Ovary (tissue), 10 donors: ENCODE measurements at regions of chr6 and their contacts with region 1.

Region 1: GRCh38 chr6:159789377-159790148 is at the start of gene TCP1:
- DNase-seq: peak; percentile 98 to 100 (median 99)
- H3K4me3 ChIP-seq: peak within 1 kb of the TSS; percentile 62
- H3K27ac ChIP-seq: peak within 1 kb of the TSS; percentile 95 to 97
- H3K4me1 ChIP-seq: peaks cover 11% of the 10 kb centered on the region
- H3K27me3 ChIP-seq: no peaks in the 10 kb centered on the region
- CTCF ChIP-seq: peak in 1 of 3 donors; percentile 11
- EP300 ChIP-seq: peak; percentile 21
- POLR2A ChIP-seq: peak; percentile 93
- total RNA-seq, gene TCP1: 83.5 to 189 (median 162) TPM

Region 2: GRCh38 chr6:159761873-159762680 is 27.5 kb before region 1 on chr6 and contains the start of gene ACAT2:
- intact Hi-C with region 1: loop called in 1 of 4 experiments (anchors 2 kb)
- DNase-seq: peak; percentile 95 to 97 (median 96)
- H3K4me3 ChIP-seq: peak within 1 kb of the TSS; percentile 86
- H3K27ac ChIP-seq: peak within 1 kb of the TSS; percentile 98 to 100
- H3K4me1 ChIP-seq: peaks cover 12% of the 10 kb centered on the region
- H3K27me3 ChIP-seq: no peaks in the 10 kb centered on the region
- CTCF ChIP-seq: peak in 1 of 3 donors; percentile 33
- EP300 ChIP-seq: peak; percentile 36
- POLR2A ChIP-seq: peak; percentile 69
- total RNA-seq, gene ACAT2: 7.2 to 113 (median 20.3) TPM

Region 3: GRCh38 chr6:159833556-159833955 is 44.0 kb after region 1 on chr6:
- intact Hi-C with region 1: loop called in 1 of 4 experiments (anchors 5 kb)
- DNase-seq: no peak
- H3K4me3 ChIP-seq: no peak overlapping the region
- H3K27ac ChIP-seq: no peak overlapping the region
- H3K4me1 ChIP-seq: peaks cover 6% of the 10 kb centered on the region
- H3K27me3 ChIP-seq: no peaks in the 10 kb centered on the region
- CTCF ChIP-seq: no peak
- EP300 ChIP-seq: no peak
- POLR2A ChIP-seq: no peak